ENCODE measurements at regions of chr3 and their contacts with region 1.

Region 1: DNA sequence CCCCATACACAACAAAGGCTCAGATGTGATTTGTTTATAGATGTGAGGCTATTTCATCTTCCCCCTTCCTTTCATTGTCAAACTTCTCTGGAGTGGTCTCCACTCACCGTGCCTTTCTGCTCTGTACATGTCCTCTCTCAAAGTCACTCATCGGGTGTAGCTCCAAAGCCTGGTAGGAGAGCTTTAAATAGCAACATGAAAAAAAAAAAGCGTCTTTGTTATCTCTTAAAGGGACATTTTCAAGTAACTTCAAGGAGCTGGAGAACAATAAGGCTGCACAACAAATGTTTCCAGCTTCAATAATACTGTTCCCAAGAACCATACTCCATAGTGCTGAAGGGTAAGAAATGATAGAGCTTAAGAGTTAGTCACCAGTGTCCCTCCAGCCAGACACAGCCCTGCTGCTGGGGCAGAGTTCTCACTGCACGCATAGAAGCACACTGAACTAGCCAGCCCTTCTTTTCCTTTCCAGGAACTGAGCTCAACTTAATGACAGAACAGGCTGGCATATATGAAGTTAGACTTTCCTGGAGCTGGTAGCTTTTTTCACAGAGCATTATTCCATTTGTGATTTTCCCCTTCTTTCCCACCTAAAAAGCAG is 8.1 kb downstream of the FBXO40 start:
- DNase-seq: no peak

Region 2: GRCh38 chr3:121648219-121648958 is 47.1 kb after region 1 on chr3:
- intact Hi-C with region 1: loop called (anchors 2 kb)
- DNase-seq: no peak